ENCODE measurements at regions of chr7 and their contacts with region 1.

Region 1: GRCh38 chr7:131147604-131148003 is 180.1 kb upstream of the MKLN1 start:
- DNase-seq: no peak
- H3K4me3 ChIP-seq: no peak overlapping the region
- H3K27ac ChIP-seq: no peak overlapping the region
- H3K4me1 ChIP-seq: no peaks in the 10 kb centered on the region
- H3K27me3 ChIP-seq: no peaks in the 10 kb centered on the region
- CTCF ChIP-seq: no peak

Region 2: DNA sequence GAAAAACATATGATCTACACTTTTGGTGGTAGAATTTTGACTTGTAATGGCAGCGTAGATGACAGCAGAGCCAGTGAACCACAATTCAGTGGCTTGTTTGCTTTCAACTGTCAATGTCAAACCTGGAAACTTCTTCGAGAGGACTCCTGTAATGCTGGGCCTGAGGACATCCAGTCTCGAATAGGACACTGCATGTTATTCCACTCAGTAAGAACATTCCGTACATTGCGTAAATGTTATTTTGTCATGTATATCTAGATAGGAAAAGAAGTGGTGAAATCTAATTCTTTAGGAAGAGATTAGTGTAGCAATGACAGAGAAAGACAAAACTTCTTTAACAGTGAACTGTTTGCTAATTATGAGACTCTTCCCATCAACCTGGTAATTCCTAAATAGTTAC is 295.9 kb after region 1 on chr7:
- CTCF ChIA-PET with region 1: no interaction called
- POLR2A ChIA-PET with region 1: interaction called, 12 read pairs
- intact Hi-C with region 1: no loop called
- DNase-seq: no peak
- H3K4me3 ChIP-seq: no peak overlapping the region
- H3K27ac ChIP-seq: no peak overlapping the region
- H3K4me1 ChIP-seq: no peaks in the 10 kb centered on the region
- H3K27me3 ChIP-seq: no peaks in the 10 kb centered on the region
- CTCF ChIP-seq: no peak

Measured in PC-9 (cell line).